ENCODE measurements at regions of chr17 and their contacts with region 1.

Region 1: DNA sequence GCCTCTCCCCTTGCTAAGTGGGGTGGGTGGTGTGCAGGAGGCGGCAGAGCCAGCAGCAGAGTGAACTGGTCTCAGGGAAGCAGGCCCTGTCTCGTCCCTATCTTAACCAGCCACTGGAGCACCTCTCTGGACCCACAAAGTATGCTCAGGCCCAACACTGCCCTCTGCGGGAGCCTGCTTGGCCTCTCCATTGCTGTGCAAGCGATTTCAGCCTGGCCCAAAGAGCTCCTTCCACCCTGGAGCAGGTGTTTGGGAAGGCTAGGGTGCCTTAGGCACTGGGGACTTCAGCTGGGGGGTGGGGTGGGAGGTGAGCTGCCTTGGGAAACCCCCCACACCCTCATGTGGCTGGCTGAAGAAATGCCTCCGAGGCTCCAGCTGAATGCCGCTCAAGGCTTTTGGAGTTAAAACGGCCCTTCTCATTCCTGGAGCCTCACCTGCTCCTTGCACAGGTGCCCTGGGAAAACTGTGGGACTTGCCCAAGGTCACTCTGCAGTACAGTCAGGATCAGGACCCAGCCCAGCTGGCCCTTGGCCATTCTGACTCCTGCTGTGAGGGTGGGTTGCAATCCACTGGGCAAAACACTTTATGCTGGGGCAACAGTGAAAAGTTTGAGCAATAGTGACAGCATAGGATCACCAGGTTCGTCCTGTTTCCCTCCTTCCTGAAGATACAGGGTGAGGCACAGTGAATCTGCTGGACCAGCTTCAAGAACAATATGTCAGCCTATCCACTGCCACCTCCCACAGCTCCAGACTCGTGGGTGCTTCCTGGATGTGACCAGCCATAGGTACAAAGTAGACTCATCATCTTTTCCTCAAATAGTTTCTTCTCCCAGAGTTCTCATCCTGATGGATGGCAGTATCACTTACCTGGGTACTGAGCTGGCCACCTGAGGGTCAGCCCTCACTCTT is 5.9 kb upstream of the UBE2O start:
- DNase-seq: peak; percentile 78 to 79
- H3K4me3 ChIP-seq: no peak overlapping the region
- H3K4me3 Mint-ChIP-seq: no peak overlapping the region
- H3K27ac Mint-ChIP-seq: no peak overlapping the region
- H3K4me1 ChIP-seq: no peaks in the 10 kb centered on the region
- H3K4me1 Mint-ChIP-seq: no peaks in the 10 kb centered on the region
- H3K27me3 ChIP-seq: no peaks in the 10 kb centered on the region
- H3K27me3 Mint-ChIP-seq: no peaks in the 10 kb centered on the region
- CTCF ChIP-seq: peak; percentile 63 to 79

Region 2: GRCh38 chr17:76408052-76408849 is 50.6 kb before region 1 on chr17:
- CTCF ChIA-PET with region 1: interaction called, 23 read pairs
- POLR2A ChIA-PET with region 1: interaction called, 5 read pairs
- intact Hi-C with region 1: loop called (anchors 1 kb)
- DNase-seq: peak in 1 of 2 experiments; percentile 76
- H3K4me3 ChIP-seq: no peak overlapping the region
- H3K4me3 Mint-ChIP-seq: no peak overlapping the region
- H3K27ac Mint-ChIP-seq: no peak overlapping the region
- H3K4me1 ChIP-seq: no peaks in the 10 kb centered on the region
- H3K4me1 Mint-ChIP-seq: peaks cover 5% of the 10 kb centered on the region
- H3K27me3 ChIP-seq: no peaks in the 10 kb centered on the region
- H3K27me3 Mint-ChIP-seq: no peaks in the 10 kb centered on the region
- CTCF ChIP-seq: peak; percentile 71 to 96

Region 3: DNA sequence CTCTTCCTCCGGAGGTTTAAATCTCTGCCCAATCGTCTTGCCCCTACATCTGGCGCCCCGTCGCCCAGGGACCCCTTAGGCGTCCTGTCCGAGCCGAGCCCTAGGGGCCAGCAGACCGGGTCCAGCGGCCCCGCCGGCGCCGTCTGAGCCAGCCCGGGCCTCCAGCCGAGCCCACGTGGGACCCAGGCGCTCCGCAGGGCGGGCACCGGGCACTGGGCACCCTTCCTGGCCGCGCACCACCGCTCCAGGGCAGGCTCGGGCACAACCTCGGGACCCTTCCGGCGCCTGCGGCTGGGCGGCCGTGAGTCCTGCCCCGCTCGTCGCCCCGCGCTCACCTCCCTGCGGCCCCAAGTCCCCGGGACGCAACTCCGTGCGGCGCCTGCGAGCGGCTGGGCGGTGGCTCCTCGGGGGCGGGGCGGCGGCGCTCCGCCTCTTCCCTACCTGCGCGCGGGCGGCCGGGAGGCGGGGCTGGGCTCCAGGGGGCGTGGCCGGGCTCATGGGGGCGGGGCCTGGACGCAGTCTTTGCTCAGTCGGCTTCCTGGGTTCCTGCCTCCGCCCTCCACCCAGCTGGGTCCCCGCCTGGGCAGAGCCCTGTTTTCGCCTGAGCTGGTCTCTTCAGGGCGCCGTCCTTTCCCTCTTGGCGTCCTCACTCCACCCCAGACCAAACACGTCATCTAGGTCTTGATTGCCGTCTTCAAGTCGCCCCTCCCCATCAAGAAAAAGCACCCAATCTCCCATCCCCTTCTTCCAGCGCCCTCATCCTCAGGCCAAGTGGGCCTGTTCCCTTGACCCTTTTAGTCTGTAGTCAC is 42.4 kb after region 1 on chr17 and contains the start of gene RHBDF2:
- CTCF ChIA-PET with region 1: interaction called, 12 read pairs
- POLR2A ChIA-PET with region 1: interaction called, 5 read pairs
- intact Hi-C with region 1: loop called (anchors 1 kb)
- DNase-seq: peak; percentile 92 to 97
- H3K4me3 ChIP-seq: peak within 1 kb of the TSS; percentile 64
- H3K4me3 Mint-ChIP-seq: peak within 1 kb of the TSS; percentile 87
- H3K27ac Mint-ChIP-seq: peak within 1 kb of the TSS; percentile 91
- H3K4me1 ChIP-seq: peaks cover 35% of the 10 kb centered on the region
- H3K4me1 Mint-ChIP-seq: peaks cover 21% of the 10 kb centered on the region
- H3K27me3 ChIP-seq: no peaks in the 10 kb centered on the region
- H3K27me3 Mint-ChIP-seq: no peaks in the 10 kb centered on the region
- CTCF ChIP-seq: no peak
- total RNA-seq, gene RHBDF2: 33.8 and 37.2 TPM in 2 replicates